ENCODE measurements at regions of chr3 and their contacts with region 1.

Region 1: DNA sequence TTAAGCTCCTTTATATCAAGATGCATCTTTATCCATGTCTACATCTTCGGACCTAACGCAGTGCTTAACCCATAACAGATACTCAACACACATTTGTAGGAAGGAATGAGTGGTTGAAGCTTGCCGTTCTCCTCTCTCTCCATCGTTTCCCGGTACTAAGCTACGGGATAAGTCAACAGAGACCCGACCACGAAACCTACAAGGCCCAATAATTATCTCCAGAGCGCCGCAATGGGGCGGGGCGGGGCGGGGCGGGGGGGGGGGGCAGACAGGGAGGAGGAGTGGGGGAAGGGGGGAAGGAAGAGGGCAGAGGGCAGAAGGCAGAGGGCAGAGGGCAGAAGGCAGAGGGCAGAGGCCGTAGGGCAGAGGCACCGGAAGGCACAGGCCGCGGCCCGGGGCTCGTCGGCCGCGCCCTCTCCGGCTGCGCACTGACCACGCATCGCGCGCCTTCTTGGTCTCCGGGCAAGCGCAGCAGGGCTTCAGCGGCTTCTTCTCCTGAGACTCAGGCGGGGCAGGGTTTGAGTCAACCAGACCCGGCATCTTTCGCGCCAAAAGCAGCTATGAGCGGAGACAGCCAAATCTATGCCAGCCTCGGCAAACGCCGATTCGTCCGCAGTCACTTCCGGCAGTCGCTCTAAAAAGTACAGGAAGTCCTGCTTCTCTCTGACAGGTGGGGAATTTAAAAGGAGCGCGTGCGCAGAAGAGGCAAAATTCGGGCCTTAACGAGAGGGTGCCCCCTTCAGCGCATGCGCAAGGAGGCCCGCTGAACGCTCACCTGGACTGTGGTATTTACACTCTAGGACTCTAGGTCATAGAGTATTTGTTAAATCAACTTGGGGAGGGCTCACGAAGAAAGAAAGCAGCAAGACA is at the start of gene COX17:
- DNase-seq: peak; percentile 94
- ATAC-seq: peak; percentile 90
- H3K4me3 ChIP-seq: peak within 1 kb of the TSS; percentile 85
- H3K27ac ChIP-seq: peak within 1 kb of the TSS; percentile 46
- H3K4me1 ChIP-seq: no peaks in the 10 kb centered on the region
- H3K27me3 ChIP-seq: no peaks in the 10 kb centered on the region
- CTCF ChIP-seq: no peak
- POLR2A ChIP-seq: peak; percentile 68; the same call in 1 of the 2 replicates
- RAD21 ChIP-seq: no peak
- total RNA-seq, gene COX17: 2.0 and 8.6 TPM in 2 replicates

Region 2: DNA sequence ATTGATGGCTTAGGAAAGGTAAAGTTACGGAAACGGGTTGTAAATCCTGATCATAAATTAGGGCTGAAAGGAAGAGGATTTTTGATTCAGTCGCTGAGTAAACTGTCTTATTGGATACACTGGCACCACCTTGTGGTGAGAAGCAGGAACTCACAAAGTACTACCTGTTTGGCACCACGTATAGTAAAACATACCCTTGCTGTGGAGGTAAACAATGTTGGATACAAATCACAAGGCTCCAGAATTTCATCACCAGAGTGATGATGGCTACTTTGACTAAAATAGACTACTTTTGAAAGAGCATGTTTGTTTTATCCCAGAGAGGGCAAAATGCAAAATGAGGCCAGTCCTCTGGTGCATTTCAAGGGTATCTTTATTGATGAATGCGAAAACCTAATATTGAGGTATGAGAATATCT is 859.2 kb before region 1 on chr3:
- CTCF ChIA-PET with region 1: no interaction called
- POLR2A ChIA-PET with region 1: no interaction called
- dilution Hi-C with region 1: no loop called
- in situ Hi-C with region 1: no loop called
- intact Hi-C with region 1: no loop called
- DNase-seq: peak; percentile 57
- ATAC-seq: peak; percentile 83
- H3K4me3 ChIP-seq: no peak overlapping the region
- H3K27ac ChIP-seq: no peak overlapping the region
- H3K4me1 ChIP-seq: no peaks in the 10 kb centered on the region
- H3K27me3 ChIP-seq: peaks cover 1% of the 10 kb centered on the region; the same call in 1 of the 2 replicates
- CTCF ChIP-seq: peak; percentile 70
- POLR2A ChIP-seq: no peak
- RAD21 ChIP-seq: peak; percentile 62

Region 3: GRCh38 chr3:118884748-118885206 is 792.2 kb before region 1 on chr3:
- CTCF ChIA-PET with region 1: interaction called, 3 read pairs
- POLR2A ChIA-PET with region 1: no interaction called
- dilution Hi-C with region 1: no loop called
- in situ Hi-C with region 1: loop called (anchors 25 kb)
- intact Hi-C with region 1: loop called (anchors 1 kb)
- DNase-seq: peak; percentile 33
- ATAC-seq: peak; percentile 93
- H3K4me3 ChIP-seq: no peak overlapping the region
- H3K27ac ChIP-seq: no peak overlapping the region
- H3K4me1 ChIP-seq: no peaks in the 10 kb centered on the region
- H3K27me3 ChIP-seq: no peaks in the 10 kb centered on the region; the same call in 1 of the 2 replicates
- CTCF ChIP-seq: peak; percentile 70
- POLR2A ChIP-seq: no peak
- RAD21 ChIP-seq: peak; percentile 54

Region 4: GRCh38 chr3:119145500-119146191 is 531.4 kb before region 1 on chr3 and contains the start of gene TEX55:
- CTCF ChIA-PET with region 1: no interaction called
- POLR2A ChIA-PET with region 1: no interaction called
- dilution Hi-C with region 1: no loop called
- in situ Hi-C with region 1: loop called (anchors 25 kb)
- intact Hi-C with region 1: loop called (anchors 1 kb)
- DNase-seq: peak; percentile 61
- ATAC-seq: peak; percentile 81
- H3K4me3 ChIP-seq: no peak within 1 kb of the TSS
- H3K27ac ChIP-seq: no peak within 1 kb of the TSS
- H3K4me1 ChIP-seq: peaks cover 4% of the 10 kb centered on the region
- H3K27me3 ChIP-seq: no peaks in the 10 kb centered on the region
- CTCF ChIP-seq: peak; percentile 76
- POLR2A ChIP-seq: no peak
- RAD21 ChIP-seq: peak; percentile 81
- total RNA-seq, gene TEX55: not detected in 2 replicates

Region 5: DNA sequence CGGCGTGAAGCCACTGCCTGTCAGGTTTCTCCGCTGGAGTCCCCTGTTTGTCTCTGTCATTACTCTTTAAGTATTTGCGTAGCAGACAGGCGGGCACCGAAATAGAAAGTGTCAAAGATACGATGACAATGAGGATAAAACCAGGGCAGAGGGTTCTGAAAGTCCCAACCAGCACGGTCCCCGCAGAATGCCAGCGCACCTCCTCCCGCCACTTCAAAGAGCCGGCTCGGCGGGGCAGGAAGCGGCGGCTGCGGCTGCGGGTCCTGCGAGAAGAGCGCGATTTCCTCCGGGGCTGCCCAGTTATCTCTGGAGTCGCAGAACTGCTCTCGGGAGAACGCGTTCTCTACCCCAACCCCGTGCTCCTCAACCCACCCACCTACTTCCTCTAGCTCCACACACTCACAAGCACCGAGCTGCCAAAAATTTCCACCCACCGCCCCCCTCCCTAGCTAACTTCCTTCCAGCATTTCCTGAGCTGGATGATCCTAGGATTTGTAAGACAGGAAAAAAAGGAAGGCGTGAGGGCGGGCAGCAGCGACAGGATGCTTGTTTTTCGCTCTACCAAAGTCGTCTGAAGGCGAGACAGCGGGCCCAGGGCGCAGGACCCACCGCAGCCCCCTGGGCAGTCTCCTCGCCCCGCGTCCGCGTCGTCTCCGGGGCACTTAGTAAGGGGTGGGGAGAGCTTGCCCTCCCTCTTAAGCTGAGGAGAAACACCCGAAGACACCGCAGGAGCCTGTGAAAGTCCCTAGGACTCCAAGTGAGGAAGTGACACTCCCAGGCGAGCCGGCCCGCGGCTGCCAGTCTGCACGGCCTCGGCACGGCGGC is 382.9 kb before region 1 on chr3 and contains the start of gene ARHGAP31:
- CTCF ChIA-PET with region 1: no interaction called
- POLR2A ChIA-PET with region 1: no interaction called
- dilution Hi-C with region 1: no loop called
- in situ Hi-C with region 1: loop called (anchors 25 kb)
- intact Hi-C with region 1: no loop called
- DNase-seq: peak; percentile 81
- ATAC-seq: peak; percentile 80
- H3K4me3 ChIP-seq: peak within 1 kb of the TSS; percentile 94
- H3K27ac ChIP-seq: peak within 1 kb of the TSS; percentile 96
- H3K4me1 ChIP-seq: peaks cover 5% of the 10 kb centered on the region
- H3K27me3 ChIP-seq: no peaks in the 10 kb centered on the region
- CTCF ChIP-seq: no peak
- POLR2A ChIP-seq: peak; percentile 26; the same call in 1 of the 2 replicates
- RAD21 ChIP-seq: no peak
- total RNA-seq, gene ARHGAP31: 6.6 and 7.5 TPM in 2 replicates

Region 6: GRCh38 chr3:119498186-119498987 is 178.6 kb before region 1 on chr3 and contains the start of gene TIMMDC1:
- CTCF ChIA-PET with region 1: no interaction called
- POLR2A ChIA-PET with region 1: no interaction called
- dilution Hi-C with region 1: no loop called
- in situ Hi-C with region 1: loop called (anchors 25 kb)
- intact Hi-C with region 1: loop called (anchors 1 kb)
- DNase-seq: peak; percentile 94
- ATAC-seq: peak; percentile 98
- H3K4me3 ChIP-seq: peak within 1 kb of the TSS; percentile 87
- H3K27ac ChIP-seq: peak within 1 kb of the TSS; percentile 95
- H3K4me1 ChIP-seq: peaks cover 5% of the 10 kb centered on the region; the same call in 1 of the 2 replicates
- H3K27me3 ChIP-seq: no peaks in the 10 kb centered on the region
- CTCF ChIP-seq: no peak
- POLR2A ChIP-seq: peak; percentile 75
- RAD21 ChIP-seq: no peak
- total RNA-seq, gene TIMMDC1: 44.2 and 52.5 TPM in 2 replicates

Region 7: GRCh38 chr3:119657887-119658702 is 18.9 kb before region 1 on chr3:
- CTCF ChIA-PET with region 1: no interaction called
- POLR2A ChIA-PET with region 1: no interaction called
- dilution Hi-C with region 1: no loop called
- in situ Hi-C with region 1: no loop called
- intact Hi-C with region 1: no loop called
- DNase-seq: no peak
- ATAC-seq: no peak
- H3K4me3 ChIP-seq: no peak overlapping the region
- H3K27ac ChIP-seq: no peak overlapping the region
- H3K4me1 ChIP-seq: peaks cover 2% of the 10 kb centered on the region; the same call in 1 of the 2 replicates
- H3K27me3 ChIP-seq: peaks cover 8% of the 10 kb centered on the region
- CTCF ChIP-seq: no peak
- POLR2A ChIP-seq: no peak
- RAD21 ChIP-seq: no peak